ENCODE measurements at regions of chr6 and their contacts with region 1.

Region 1: DNA sequence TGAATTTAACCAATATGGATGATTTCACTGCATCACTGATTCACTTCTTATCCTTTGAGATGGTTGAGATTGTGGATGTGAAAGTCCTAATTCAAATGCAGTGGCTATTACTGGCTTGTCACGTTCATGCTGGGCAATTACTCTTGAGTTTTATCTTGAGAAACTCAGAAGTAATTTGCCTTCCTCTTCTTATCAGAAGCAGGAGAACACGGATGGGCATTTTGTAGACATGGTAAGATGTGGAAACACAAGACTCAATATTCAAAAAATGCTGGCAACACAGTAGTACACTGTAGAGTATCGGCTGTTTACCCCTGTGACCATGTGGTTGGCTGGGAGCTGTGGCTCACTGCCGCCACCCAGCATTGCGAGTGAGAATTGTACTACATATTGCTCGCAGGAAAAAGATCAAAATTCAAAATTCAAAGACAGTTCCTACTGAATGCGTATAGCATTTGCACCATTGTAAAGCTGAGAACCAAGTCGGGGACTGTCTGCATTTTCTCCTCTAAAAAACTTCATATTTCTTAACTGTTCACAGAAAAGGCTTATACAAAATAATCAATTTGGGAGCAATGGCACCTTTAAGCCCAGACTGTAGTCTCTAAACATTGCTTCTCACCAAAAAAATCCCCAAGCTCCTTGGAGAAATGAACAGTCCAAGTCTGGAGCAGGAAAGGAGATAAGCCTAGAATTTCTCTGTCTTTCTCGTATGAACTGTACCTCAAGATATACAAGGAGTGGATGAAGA is 61.9 kb upstream of the ELOVL5 start:
- DNase-seq: peak; percentile 32
- H3K4me3 Mint-ChIP-seq: no peak overlapping the region
- H3K27ac Mint-ChIP-seq: no peak overlapping the region
- H3K4me1 Mint-ChIP-seq: no peaks in the 10 kb centered on the region
- H3K27me3 Mint-ChIP-seq: peaks cover 2% of the 10 kb centered on the region

Region 2: GRCh38 chr6:53290537-53291510 is 119.9 kb before region 1 on chr6:
- intact Hi-C with region 1: loop called (anchors 1 kb)
- DNase-seq: no peak
- H3K4me3 Mint-ChIP-seq: no peak overlapping the region
- H3K27ac Mint-ChIP-seq: peak overlapping the region; percentile 58
- H3K4me1 Mint-ChIP-seq: peaks cover 24% of the 10 kb centered on the region
- H3K27me3 Mint-ChIP-seq: no peaks in the 10 kb centered on the region

Measured in activated T-helper 1 cell treated with anti-CD3 and anti-CD28 coated beads, Interleukin-12 subunit alpha, Interleukin-12 subunit beta, Interleukin-2, Interleukin-4 antibody, amounts not matched to agents 30 ng/mL and 10 ng/mL and 1 ng/mL, durations not matched to agents 14 hours and 24 hours and 36 hours (primary cell).